RWPE1 (cell line): ENCODE measurements at regions of chr2 and their contacts with region 1.

Region 1: GRCh38 chr2:96856776-96857673 is 791 bp downstream of the ANKRD39 start:
- DNase-seq: no peak
- H3K27ac ChIP-seq: peak overlapping the region; percentile 72
- CTCF ChIP-seq: no peak

Region 2: GRCh38 chr2:96844405-96844808 is 12.6 kb before region 1 on chr2:
- CTCF ChIA-PET with region 1: interaction called, 11 read pairs
- POLR2A ChIA-PET with region 1: no interaction called
- DNase-seq: no peak
- H3K27ac ChIP-seq: no peak overlapping the region
- CTCF ChIP-seq: no peak

Region 3: DNA sequence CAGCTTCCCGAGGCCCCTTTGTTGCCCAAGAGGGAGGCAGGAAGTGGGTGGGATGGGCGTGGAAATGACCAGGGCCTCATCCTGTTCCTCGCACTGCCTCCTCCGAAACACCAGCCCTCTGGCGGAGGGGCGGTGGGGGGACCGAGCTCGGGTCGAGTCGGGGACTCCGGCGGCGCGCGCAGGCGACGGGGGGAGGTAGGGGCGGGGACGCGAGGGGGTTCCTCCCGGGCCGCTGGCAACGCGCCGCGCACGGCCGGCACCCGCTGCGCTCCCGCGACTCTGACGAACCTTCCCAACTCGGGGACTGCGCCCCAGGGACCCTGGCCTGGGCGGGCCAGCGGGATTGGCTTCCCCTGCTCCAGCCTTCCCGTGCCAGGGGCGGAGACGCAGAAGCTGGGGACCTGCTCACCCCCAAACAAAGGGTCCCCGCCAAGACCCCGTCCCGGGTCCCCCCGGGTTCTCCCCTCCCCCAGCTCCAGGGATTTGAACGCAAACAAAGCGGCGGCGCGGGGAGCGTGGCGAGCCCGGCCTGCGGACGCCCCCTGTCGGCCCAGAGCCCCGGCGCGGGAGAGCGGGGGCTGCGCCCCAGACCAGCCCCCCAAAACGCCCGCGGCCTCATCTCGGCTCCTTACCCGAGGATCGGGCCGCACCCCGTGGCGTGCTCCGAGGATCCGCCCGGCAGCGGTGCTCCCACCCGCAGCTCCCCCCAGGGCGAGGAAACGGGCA is 11.7 kb after region 1 on chr2:
- CTCF ChIA-PET with region 1: interaction called, 12 read pairs
- POLR2A ChIA-PET with region 1: interaction called, 9 read pairs
- DNase-seq: peak; percentile 82
- H3K27ac ChIP-seq: peak overlapping the region; percentile 89
- CTCF ChIP-seq: peak; percentile 72

Region 4: DNA sequence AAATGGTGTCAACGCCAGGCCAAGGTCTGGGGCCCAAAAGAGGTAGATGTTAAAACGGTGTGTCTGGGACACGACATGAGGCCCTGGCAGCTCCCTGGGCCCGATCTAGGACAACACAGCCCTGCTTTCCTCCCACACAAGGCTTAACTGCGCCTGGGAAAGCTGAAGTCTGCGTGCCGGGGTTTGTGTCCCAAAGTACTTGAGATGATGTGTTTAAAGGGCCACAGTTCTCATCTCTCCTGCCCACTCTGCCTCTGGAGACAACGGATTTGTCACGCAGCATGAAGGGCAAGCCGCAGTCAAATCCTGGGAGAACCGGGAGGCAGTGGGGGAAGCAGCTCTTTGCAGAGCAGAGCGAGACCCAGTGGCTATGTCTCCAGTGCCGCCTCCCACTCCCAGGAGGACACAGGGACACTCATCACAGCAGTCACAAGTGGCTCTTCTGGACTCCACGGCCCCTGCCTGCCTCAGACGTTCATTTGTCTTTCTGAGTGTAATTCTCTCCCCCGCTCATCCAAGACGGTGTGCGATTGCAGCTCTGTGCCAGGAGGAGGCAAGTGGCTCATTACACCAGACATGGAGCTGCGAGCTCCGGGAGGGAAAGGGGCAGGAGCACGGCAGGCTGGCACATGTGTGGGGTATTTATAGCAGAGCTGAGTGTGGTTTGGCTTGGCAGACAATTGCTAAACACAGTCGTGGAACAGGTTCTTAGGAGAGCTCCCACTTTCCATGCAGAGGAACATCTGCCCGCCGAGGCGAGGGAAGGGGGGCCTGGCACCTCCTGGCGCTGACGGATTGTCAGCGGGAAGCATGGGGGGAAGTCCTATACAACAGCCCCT is 70.6 kb after region 1 on chr2:
- CTCF ChIA-PET with region 1: interaction called, 17 read pairs
- POLR2A ChIA-PET with region 1: no interaction called
- DNase-seq: peak; percentile 88
- H3K27ac ChIP-seq: peak overlapping the region; percentile 43
- CTCF ChIP-seq: peak; percentile 41

Region 5: DNA sequence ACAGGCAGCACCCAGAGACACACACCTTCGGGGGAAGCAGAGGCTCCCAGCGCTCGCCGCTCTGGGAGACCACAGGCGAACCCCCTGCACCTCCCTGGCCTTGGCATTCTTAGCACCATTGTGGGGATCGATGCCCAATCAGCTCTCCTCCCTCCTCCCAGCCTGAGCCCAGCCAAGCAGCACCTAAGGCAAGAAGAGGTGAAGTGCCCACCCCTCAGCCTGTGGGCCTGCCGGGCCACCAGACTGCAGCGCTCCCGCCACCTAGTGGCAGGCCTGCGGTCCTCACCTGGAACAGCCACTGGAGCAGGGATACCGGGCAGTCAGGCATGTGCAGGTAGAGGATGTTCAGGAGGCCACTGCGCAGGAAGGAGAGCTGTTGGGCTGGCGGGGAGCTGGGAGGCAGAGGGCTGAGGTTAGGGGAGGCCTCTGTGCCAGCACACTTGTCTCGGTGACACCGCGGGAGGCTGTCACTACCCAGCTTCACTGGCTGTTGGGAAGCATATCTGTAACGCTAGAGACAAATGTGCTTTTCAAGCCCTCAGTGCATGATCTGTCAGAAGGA is 94.1 kb after region 1 on chr2:
- CTCF ChIA-PET with region 1: interaction called, 45 read pairs
- POLR2A ChIA-PET with region 1: interaction called, 3 read pairs
- DNase-seq: peak; percentile 83
- H3K27ac ChIP-seq: no peak overlapping the region
- CTCF ChIP-seq: peak; percentile 96